ENCODE measurements at regions of chr12 and their contacts with region 1.

Region 1: GRCh38 chr12:101773650-101774162 is 34.4 kb upstream of the SYCP3 start:
- DNase-seq: no peak
- ATAC-seq: peak; percentile 96
- H3K4me3 ChIP-seq: no peak overlapping the region
- H3K27ac ChIP-seq: no peak overlapping the region
- H3K4me1 ChIP-seq: peaks cover 5% of the 10 kb centered on the region
- H3K27me3 ChIP-seq: no peaks in the 10 kb centered on the region
- CTCF ChIP-seq: peak; percentile 98

Region 2: GRCh38 chr12:101830367-101831325 is 56.9 kb after region 1 on chr12 and contains the start of gene GNPTAB:
- intact Hi-C with region 1: loop called (anchors 10 kb)
- DNase-seq: peak; percentile 97
- ATAC-seq: peak; percentile 99
- H3K4me3 ChIP-seq: peak within 1 kb of the TSS; percentile 83
- H3K27ac ChIP-seq: peak within 1 kb of the TSS; percentile 83
- H3K4me1 ChIP-seq: peaks cover 35% of the 10 kb centered on the region
- H3K27me3 ChIP-seq: no peaks in the 10 kb centered on the region
- CTCF ChIP-seq: peak; percentile 71
- total RNA-seq, gene GNPTAB: 65.9 TPM

Region 3: GRCh38 chr12:101962486-101962885 is 188.8 kb after region 1 on chr12:
- intact Hi-C with region 1: no loop called
- DNase-seq: no peak
- ATAC-seq: peak; percentile 61
- H3K4me3 ChIP-seq: no peak overlapping the region
- H3K27ac ChIP-seq: no peak overlapping the region
- H3K4me1 ChIP-seq: no peaks in the 10 kb centered on the region
- H3K27me3 ChIP-seq: no peaks in the 10 kb centered on the region
- CTCF ChIP-seq: no peak